ENCODE measurements at regions of chr3 and their contacts with region 1.

Region 1: GRCh38 chr3:102229062-102229655 is 205.7 kb upstream of the ZPLD1 start:
- DNase-seq: peak; percentile 51
- ATAC-seq: peak; percentile 88
- H3K4me3 ChIP-seq: no peak overlapping the region
- H3K27ac ChIP-seq: no peak overlapping the region
- H3K4me1 ChIP-seq: no peaks in the 10 kb centered on the region
- H3K27me3 ChIP-seq: no peaks in the 10 kb centered on the region
- CTCF ChIP-seq: peak; percentile 87
- EP300 ChIP-seq: no peak
- POLR2A ChIP-seq: no peak
- RAD21 ChIP-seq: peak; percentile 62; the same call in 1 of the 2 replicates

Region 2: GRCh38 chr3:101809178-101810021 is 419.8 kb before region 1 on chr3:
- CTCF ChIA-PET with region 1: interaction called, 24 read pairs
- POLR2A ChIA-PET with region 1: no interaction called
- in situ Hi-C with region 1: loop called (anchors 5 kb)
- intact Hi-C with region 1: loop called (anchors 1 kb)
- DNase-seq: peak; percentile 29
- ATAC-seq: peak; percentile 66
- H3K4me3 ChIP-seq: no peak overlapping the region
- H3K27ac ChIP-seq: no peak overlapping the region
- H3K4me1 ChIP-seq: peaks cover 23% of the 10 kb centered on the region
- H3K27me3 ChIP-seq: no peaks in the 10 kb centered on the region
- CTCF ChIP-seq: peak; percentile 71
- EP300 ChIP-seq: no peak
- POLR2A ChIP-seq: no peak
- RAD21 ChIP-seq: peak; percentile 57

Region 3: GRCh38 chr3:102240720-102241119 is 11.6 kb after region 1 on chr3:
- CTCF ChIA-PET with region 1: no interaction called
- POLR2A ChIA-PET with region 1: no interaction called
- in situ Hi-C with region 1: no loop called
- intact Hi-C with region 1: no loop called
- DNase-seq: no peak
- ATAC-seq: no peak
- H3K4me3 ChIP-seq: no peak overlapping the region
- H3K27ac ChIP-seq: no peak overlapping the region
- H3K4me1 ChIP-seq: no peaks in the 10 kb centered on the region
- H3K27me3 ChIP-seq: no peaks in the 10 kb centered on the region
- CTCF ChIP-seq: no peak
- EP300 ChIP-seq: no peak
- POLR2A ChIP-seq: no peak
- RAD21 ChIP-seq: no peak

Region 4: GRCh38 chr3:102536456-102536855 is 307.3 kb after region 1 on chr3:
- CTCF ChIA-PET with region 1: interaction called, 5 read pairs
- POLR2A ChIA-PET with region 1: no interaction called
- in situ Hi-C with region 1: no loop called
- intact Hi-C with region 1: loop called (anchors 1 kb)
- DNase-seq: peak; percentile 16
- ATAC-seq: peak; percentile 68
- H3K4me3 ChIP-seq: no peak overlapping the region
- H3K27ac ChIP-seq: no peak overlapping the region
- H3K4me1 ChIP-seq: no peaks in the 10 kb centered on the region
- H3K27me3 ChIP-seq: no peaks in the 10 kb centered on the region
- CTCF ChIP-seq: peak; percentile 47
- EP300 ChIP-seq: no peak
- POLR2A ChIP-seq: no peak
- RAD21 ChIP-seq: no peak

Measured in HepG2 (cell line).